MCF 10A (cell line): ENCODE measurements at regions of chr3 and their contacts with region 1.

Region 1: DNA sequence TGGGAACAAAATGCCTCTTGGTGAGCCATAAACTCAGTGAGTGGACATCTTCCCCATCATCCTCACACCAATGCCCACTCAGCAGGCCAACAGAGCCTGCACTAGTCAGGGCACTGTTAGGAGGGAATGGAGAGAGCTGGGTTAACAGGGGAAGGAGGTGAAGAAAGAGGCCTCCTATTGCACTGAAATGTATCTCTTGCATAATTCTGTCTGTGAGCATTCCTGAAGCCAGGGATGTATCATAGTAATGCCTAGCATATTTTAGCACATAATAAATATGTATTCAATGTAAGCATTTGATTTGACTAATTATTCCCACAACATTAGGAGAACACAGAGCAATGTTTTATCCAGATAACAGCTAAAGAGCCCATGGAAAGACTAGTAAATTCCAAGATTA is 81.2 kb downstream of the ANO10 start:
- DNase-seq: peak; percentile 17
- H3K4me3 Mint-ChIP-seq: no peak overlapping the region
- H3K27ac Mint-ChIP-seq: no peak overlapping the region
- H3K4me1 Mint-ChIP-seq: peaks cover 8% of the 10 kb centered on the region
- H3K27me3 Mint-ChIP-seq: no peaks in the 10 kb centered on the region
- CTCF ChIP-seq: no peak

Region 2: DNA sequence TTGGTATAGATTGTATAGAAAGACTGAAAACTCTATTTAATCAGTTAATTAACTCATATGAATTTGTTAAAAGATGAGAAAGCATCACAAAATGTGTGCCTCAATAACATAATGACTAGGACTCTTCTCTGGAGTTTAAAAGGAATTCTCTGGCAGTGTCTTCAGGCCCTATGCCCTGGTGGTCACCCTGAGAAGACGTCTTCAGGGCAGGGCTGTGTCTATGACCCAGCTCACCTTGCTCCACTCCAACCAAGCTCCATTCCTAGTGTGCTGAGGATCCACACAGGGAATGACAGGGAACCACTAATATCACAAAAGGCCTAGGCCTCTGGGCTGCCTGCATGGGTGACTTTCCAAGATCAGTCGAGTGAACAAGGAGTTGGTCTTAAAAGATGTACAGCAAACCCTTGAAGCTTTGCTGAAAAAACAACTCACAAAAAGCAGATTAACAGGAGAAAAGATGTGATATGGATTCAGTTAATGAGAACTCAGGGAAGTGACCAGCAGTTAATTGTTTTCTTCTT is 97.7 kb before region 1 on chr3:
- CTCF ChIA-PET with region 1: no interaction called
- POLR2A ChIA-PET with region 1: no interaction called
- intact Hi-C with region 1: no loop called
- DNase-seq: no peak
- H3K4me3 Mint-ChIP-seq: no peak overlapping the region
- H3K27ac Mint-ChIP-seq: no peak overlapping the region
- H3K4me1 Mint-ChIP-seq: no peaks in the 10 kb centered on the region
- H3K27me3 Mint-ChIP-seq: no peaks in the 10 kb centered on the region
- CTCF ChIP-seq: no peak

Region 3: GRCh38 chr3:43638594-43639447 is 98.2 kb after region 1 on chr3:
- CTCF ChIA-PET with region 1: no interaction called
- POLR2A ChIA-PET with region 1: no interaction called
- intact Hi-C with region 1: loop called (anchors 2 kb)
- DNase-seq: peak; percentile 67
- H3K4me3 Mint-ChIP-seq: peak overlapping the region; percentile 53
- H3K27ac Mint-ChIP-seq: peak overlapping the region; percentile 77
- H3K4me1 Mint-ChIP-seq: peaks cover 13% of the 10 kb centered on the region
- H3K27me3 Mint-ChIP-seq: no peaks in the 10 kb centered on the region
- CTCF ChIP-seq: peak; percentile 27

Region 4: GRCh38 chr3:43742920-43743319 is 202.3 kb after region 1 on chr3:
- CTCF ChIA-PET with region 1: no interaction called
- POLR2A ChIA-PET with region 1: no interaction called
- intact Hi-C with region 1: loop called (anchors 1 kb)
- DNase-seq: peak; percentile 28
- H3K4me3 Mint-ChIP-seq: no peak overlapping the region
- H3K27ac Mint-ChIP-seq: peak overlapping the region; percentile 65
- H3K4me1 Mint-ChIP-seq: no peaks in the 10 kb centered on the region
- H3K27me3 Mint-ChIP-seq: no peaks in the 10 kb centered on the region
- CTCF ChIP-seq: peak; percentile 26

Region 5: GRCh38 chr3:43855674-43856299 is 315.2 kb after region 1 on chr3:
- CTCF ChIA-PET with region 1: interaction called, 3 read pairs
- POLR2A ChIA-PET with region 1: no interaction called
- intact Hi-C with region 1: loop called (anchors 5 kb)
- DNase-seq: peak; percentile 83
- H3K4me3 Mint-ChIP-seq: no peak overlapping the region
- H3K27ac Mint-ChIP-seq: no peak overlapping the region
- H3K4me1 Mint-ChIP-seq: peaks cover 22% of the 10 kb centered on the region
- H3K27me3 Mint-ChIP-seq: peaks cover 11% of the 10 kb centered on the region
- CTCF ChIP-seq: peak; percentile 43

Region 6: GRCh38 chr3:44198284-44199269 is 658.0 kb after region 1 on chr3:
- CTCF ChIA-PET with region 1: interaction called, 33 read pairs
- POLR2A ChIA-PET with region 1: no interaction called
- intact Hi-C with region 1: loop called (anchors 1 kb)
- DNase-seq: peak; percentile 86
- H3K4me3 Mint-ChIP-seq: no peak overlapping the region
- H3K27ac Mint-ChIP-seq: no peak overlapping the region
- H3K4me1 Mint-ChIP-seq: peaks cover 11% of the 10 kb centered on the region
- H3K27me3 Mint-ChIP-seq: no peaks in the 10 kb centered on the region
- CTCF ChIP-seq: peak; percentile 83